ENCODE measurements at regions of chr1 and their contacts with region 1.

Region 1: GRCh38 chr1:184805667-184806295 is 51.1 kb upstream of the EDEM3 start:
- DNase-seq: peak; percentile 67 to 86 (median 77)
- H3K4me3 ChIP-seq: no peak overlapping the region
- H3K4me3 Mint-ChIP-seq: no peak overlapping the region
- H3K27ac ChIP-seq: no peak overlapping the region
- H3K27ac Mint-ChIP-seq: peak overlapping the region; percentile 10 to 93 (median 52)
- H3K4me1 ChIP-seq: no peaks in the 10 kb centered on the region
- H3K4me1 Mint-ChIP-seq: peaks cover 4 to 10% (median 7%) of the 10 kb centered on the region in 3 donors
- H3K27me3 ChIP-seq: no peaks in the 10 kb centered on the region
- H3K27me3 Mint-ChIP-seq: no peaks in the 10 kb centered on the region

Region 2: DNA sequence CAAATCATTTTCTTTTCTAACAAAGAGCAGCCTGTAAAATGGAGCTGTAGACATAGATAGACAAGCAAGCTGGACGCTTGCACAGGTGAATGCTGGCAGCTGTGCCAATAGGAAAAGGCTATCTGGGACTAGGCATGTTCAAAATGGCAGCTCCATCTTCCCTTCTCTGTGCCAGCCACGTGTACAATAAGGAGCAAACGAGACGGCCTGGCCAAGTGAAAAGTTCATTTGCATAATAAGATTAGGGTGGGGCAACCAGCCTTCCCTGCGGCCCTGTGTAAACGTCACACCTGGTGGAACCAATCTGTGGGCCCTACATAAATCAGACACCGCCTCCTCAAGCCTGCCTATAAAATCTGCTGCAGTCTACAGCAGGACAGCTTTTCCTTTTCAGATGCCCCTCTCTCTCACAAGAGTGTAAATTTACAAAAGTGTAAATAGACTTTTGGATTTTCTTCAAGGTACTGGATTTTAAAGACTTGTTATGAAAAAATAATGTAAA is 34.5 kb before region 1 on chr1:
- CTCF ChIA-PET with region 1: no interaction called
- POLR2A ChIA-PET with region 1: no interaction called
- DNase-seq: no peak
- H3K4me3 ChIP-seq: no peak overlapping the region
- H3K4me3 Mint-ChIP-seq: no peak overlapping the region
- H3K27ac ChIP-seq: no peak overlapping the region
- H3K27ac Mint-ChIP-seq: peak overlapping the region in 1 of 8 donors; percentile 44
- H3K4me1 ChIP-seq: no peaks in the 10 kb centered on the region
- H3K4me1 Mint-ChIP-seq: peaks cover 0 to 2% (median 0%) of the 10 kb centered on the region in 3 donors
- H3K27me3 ChIP-seq: no peaks in the 10 kb centered on the region
- H3K27me3 Mint-ChIP-seq: peaks cover 1 to 3% of the 10 kb centered on the region in 2 donors

Region 3: DNA sequence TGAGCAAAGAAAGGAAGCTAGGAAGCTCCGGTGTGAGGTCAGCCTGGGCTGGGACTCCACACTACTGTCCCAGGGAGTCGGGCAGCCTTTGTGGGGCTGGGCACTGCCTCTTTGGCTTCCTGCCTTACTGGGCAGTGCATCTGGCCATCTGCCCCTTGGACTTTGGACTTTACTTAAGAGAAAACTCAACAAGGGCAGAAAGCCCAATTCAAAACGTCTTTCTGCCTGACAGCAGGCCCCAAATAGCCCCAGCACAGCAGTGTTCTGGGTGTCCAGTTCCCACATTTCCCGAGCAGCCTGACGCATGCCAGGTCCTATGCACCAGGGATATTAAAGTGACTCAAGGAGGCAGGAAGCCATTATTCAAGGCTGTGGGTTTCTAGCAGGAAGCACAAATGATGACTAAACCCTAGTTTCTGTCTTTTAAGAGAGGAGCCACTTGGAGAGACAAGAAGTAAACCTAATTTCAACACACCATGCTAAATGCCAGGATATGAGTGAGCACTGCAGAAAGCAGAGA is 13.3 kb before region 1 on chr1:
- CTCF ChIA-PET with region 1: interaction called, 25 read pairs
- POLR2A ChIA-PET with region 1: no interaction called
- DNase-seq: no peak
- H3K4me3 ChIP-seq: no peak overlapping the region
- H3K4me3 Mint-ChIP-seq: no peak overlapping the region
- H3K27ac ChIP-seq: no peak overlapping the region
- H3K27ac Mint-ChIP-seq: peak overlapping the region in 2 of 8 donors; percentile 64 to 68
- H3K4me1 ChIP-seq: no peaks in the 10 kb centered on the region
- H3K4me1 Mint-ChIP-seq: peaks cover 6 to 7% (median 7%) of the 10 kb centered on the region in 3 donors
- H3K27me3 ChIP-seq: no peaks in the 10 kb centered on the region
- H3K27me3 Mint-ChIP-seq: peaks cover 0 to 2% of the 10 kb centered on the region in 2 donors

Region 4: DNA sequence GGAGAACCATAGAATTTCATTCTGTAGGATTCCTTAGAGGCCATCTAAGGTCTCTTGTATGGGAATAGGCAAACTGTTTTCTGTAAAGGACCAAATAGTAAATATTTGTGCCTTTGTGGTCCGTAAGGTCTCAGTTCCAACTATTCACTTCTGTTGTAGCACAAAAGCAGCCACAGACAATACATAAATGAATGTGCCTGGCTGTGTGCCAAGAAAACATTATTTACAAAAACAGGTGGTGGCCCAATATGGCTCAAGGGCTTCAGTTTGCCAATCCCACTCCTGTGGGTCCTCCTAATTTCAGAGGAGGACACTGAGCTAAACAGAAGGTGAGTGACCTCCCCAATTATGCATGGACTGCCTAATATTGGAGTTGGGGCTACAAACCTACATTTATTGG is 16.5 kb after region 1 on chr1:
- CTCF ChIA-PET with region 1: interaction called, 10 read pairs
- POLR2A ChIA-PET with region 1: no interaction called
- DNase-seq: no peak
- H3K4me3 ChIP-seq: no peak overlapping the region
- H3K4me3 Mint-ChIP-seq: no peak overlapping the region
- H3K27ac ChIP-seq: no peak overlapping the region
- H3K27ac Mint-ChIP-seq: peak overlapping the region in 2 of 8 donors; percentile 35 to 57
- H3K4me1 ChIP-seq: no peaks in the 10 kb centered on the region
- H3K4me1 Mint-ChIP-seq: peaks cover 0 to 13% (median 2%) of the 10 kb centered on the region in 3 donors
- H3K27me3 ChIP-seq: no peaks in the 10 kb centered on the region
- H3K27me3 Mint-ChIP-seq: no peaks in the 10 kb centered on the region

Region 5: DNA sequence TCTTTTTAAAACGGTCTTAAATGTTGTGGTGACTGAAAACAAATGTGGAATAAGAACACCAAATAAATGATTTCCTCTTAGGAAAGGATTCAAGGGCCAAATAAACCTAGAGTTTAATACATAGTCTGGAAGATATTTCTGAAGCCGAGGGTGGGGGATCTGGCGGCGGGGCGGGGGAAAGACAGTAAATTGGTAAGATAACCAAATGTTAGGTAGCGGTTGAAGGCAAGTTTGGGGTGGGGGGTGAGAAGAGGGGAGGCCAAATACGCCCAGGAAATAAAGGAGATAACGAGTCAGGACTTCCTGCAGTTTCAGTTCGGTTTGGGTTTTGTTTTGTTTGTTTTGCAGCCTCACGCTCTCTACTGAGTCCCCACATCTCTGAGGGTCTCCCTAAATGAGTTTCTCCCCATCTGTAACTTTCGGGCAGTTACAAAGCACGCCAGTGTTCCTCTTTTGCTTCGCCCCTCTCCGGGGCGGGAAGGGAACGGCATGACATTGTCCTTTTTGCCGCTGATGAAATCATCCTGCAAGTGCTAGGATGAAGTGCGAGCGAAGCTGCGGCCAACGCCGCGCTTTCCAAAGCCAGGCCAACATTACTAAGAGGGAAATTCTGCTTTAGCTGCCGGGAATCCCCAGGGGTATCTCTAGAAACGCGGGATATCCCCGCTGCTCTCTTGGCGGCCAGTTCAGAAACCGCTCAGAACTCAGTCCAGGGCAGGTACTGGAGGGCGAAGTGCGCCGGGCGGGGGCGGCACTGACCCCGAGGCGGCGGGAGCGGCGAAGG is 167.7 kb after region 1 on chr1:
- CTCF ChIA-PET with region 1: interaction called, 70 read pairs
- POLR2A ChIA-PET with region 1: no interaction called
- DNase-seq: peak in 4 of 5 donors; percentile 9 to 66 (median 43)
- H3K4me3 ChIP-seq: peak overlapping the region; percentile 93
- H3K4me3 Mint-ChIP-seq: peak overlapping the region; percentile 88 to 99 (median 98)
- H3K27ac ChIP-seq: peak overlapping the region; percentile 95
- H3K27ac Mint-ChIP-seq: peak overlapping the region; percentile 87 to 99 (median 98)
- H3K4me1 ChIP-seq: peaks cover 41% of the 10 kb centered on the region
- H3K4me1 Mint-ChIP-seq: peaks cover 58 to 74% (median 72%) of the 10 kb centered on the region in 3 donors
- H3K27me3 ChIP-seq: no peaks in the 10 kb centered on the region
- H3K27me3 Mint-ChIP-seq: no peaks in the 10 kb centered on the region

Region 6: DNA sequence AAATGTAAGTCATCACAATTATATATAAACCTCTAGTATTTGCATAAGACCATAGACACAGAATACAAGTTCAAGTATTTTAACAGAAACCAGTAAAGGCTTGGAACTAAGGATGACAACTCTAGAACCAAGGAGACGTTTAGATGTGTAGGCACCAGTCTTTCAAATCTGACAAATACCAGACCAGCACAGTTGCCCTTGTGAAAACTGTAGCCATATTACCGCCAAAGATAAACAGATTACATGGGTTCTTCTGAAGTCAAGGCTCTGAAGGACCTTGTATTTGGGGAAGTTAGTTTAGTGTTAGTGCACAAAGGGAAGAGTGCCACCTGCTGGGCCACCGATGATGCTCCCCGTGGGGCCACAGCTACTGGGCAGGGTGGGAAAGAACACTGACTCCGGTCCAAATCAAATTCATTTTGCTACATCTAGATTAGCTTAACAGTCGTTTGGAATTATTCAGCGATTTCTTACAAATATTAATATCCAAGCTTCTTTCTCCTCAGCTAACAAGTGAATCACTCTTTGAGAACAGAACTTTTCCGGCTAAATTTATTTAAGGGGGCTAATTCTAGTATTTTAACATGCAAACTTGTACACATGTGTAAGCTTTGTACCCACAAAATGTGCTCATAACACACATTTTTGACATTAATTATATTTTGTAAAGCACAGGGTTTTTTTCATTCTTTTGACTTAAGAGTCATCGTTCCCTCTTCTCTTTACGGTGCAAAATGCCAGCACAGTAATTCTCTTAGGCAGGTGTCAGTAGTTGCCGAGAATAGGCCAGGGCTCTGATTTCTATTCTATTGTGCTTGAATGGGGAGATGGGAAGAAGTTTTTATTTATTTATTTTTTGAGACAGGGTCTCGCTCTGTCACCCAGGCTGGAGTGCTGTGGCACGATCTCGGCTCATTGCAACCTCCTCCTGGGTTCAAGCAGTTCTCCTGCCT is 176.5 kb after region 1 on chr1:
- CTCF ChIA-PET with region 1: interaction called, 175 read pairs
- POLR2A ChIA-PET with region 1: interaction called, 8 read pairs
- DNase-seq: peak; percentile 40 to 83 (median 69)
- H3K4me3 ChIP-seq: no peak overlapping the region
- H3K4me3 Mint-ChIP-seq: no peak overlapping the region
- H3K27ac ChIP-seq: no peak overlapping the region
- H3K27ac Mint-ChIP-seq: peak overlapping the region in 3 of 8 donors; percentile 35 to 81 (median 47)
- H3K4me1 ChIP-seq: no peaks in the 10 kb centered on the region
- H3K4me1 Mint-ChIP-seq: peaks cover 7 to 9% (median 7%) of the 10 kb centered on the region in 3 donors
- H3K27me3 ChIP-seq: no peaks in the 10 kb centered on the region
- H3K27me3 Mint-ChIP-seq: peaks cover 3 to 6% of the 10 kb centered on the region in 2 donors

Measured in CD8-positive, alpha-beta memory T cell (primary cell).